ENCODE measurements at regions of chr2 and their contacts with region 1.

Region 1: DNA sequence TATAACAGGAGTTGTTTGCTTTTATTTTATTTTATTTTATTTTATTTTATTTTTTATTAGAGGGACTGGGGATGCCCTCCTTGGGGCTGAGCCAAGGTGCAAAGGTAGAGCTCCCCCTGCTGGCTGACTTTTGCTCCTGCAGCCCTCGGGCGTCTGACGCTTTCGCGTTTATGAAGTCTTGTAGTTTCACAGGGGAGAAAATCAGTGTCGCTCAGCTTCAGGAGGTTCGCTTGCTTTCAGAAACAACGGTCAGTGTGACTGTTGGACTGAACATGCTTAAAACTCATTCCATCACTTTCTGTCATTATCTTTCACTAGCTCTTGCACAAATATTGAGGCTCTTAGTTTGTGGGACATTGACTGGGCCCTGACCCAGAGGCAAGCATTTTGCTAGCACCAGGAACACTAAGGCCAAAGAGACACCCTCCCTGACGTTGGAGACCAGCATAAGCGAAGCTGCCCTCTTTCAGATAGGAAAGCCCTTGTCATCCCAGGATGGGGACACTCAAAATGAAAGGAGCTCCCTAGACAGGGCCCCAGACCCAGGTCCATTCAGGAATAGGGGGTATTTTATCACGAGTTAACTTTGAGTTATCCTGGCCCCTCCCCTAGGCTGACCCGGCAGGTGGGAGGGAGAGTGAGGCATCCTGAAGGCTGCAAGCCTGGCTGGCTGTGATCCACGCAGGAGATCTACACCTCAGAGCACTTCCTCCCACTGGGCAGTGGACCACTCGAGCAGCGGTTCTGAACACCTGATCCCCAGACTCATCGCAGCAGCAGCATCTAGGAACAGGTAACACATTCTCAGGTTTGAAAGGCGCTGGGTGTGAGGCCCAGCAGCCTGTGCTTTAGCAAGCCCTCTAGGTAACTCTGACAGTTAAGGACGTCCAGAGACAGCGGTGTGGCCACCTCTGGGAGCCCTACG is 34.4 kb downstream of the LGALSL start:
- DNase-seq: peak; percentile 24
- H3K4me3 ChIP-seq: no peak overlapping the region
- H3K27ac ChIP-seq: no peak overlapping the region
- H3K27me3 ChIP-seq: peaks cover 39% of the 10 kb centered on the region
- CTCF ChIP-seq: peak; percentile 95

Region 2: GRCh38 chr2:64052468-64053241 is 435.7 kb before region 1 on chr2:
- CTCF ChIA-PET with region 1: interaction called, 29 read pairs
- POLR2A ChIA-PET with region 1: no interaction called
- DNase-seq: no peak
- H3K4me3 ChIP-seq: no peak overlapping the region
- H3K27ac ChIP-seq: no peak overlapping the region
- H3K27me3 ChIP-seq: peaks cover 2% of the 10 kb centered on the region
- CTCF ChIP-seq: no peak

Region 3: GRCh38 chr2:64311948-64312621 is 176.2 kb before region 1 on chr2:
- CTCF ChIA-PET with region 1: interaction called, 13 read pairs
- POLR2A ChIA-PET with region 1: no interaction called
- DNase-seq: peak; percentile 24
- H3K4me3 ChIP-seq: no peak overlapping the region
- H3K27ac ChIP-seq: peak overlapping the region; percentile 39
- H3K27me3 ChIP-seq: peaks cover 35% of the 10 kb centered on the region
- CTCF ChIP-seq: peak; percentile 41

Region 4: GRCh38 chr2:64423303-64423702 is 65.0 kb before region 1 on chr2:
- CTCF ChIA-PET with region 1: no interaction called
- POLR2A ChIA-PET with region 1: no interaction called
- DNase-seq: no peak
- H3K4me3 ChIP-seq: no peak overlapping the region
- H3K27ac ChIP-seq: no peak overlapping the region
- H3K27me3 ChIP-seq: peaks cover 5% of the 10 kb centered on the region
- CTCF ChIP-seq: no peak

Region 5: GRCh38 chr2:64454386-64455332 is 33.7 kb before region 1 on chr2:
- CTCF ChIA-PET with region 1: interaction called, 16 read pairs
- POLR2A ChIA-PET with region 1: no interaction called
- DNase-seq: no peak
- H3K4me3 ChIP-seq: peak overlapping the region; percentile 57
- H3K27ac ChIP-seq: no peak overlapping the region
- H3K27me3 ChIP-seq: peaks cover 45% of the 10 kb centered on the region
- CTCF ChIP-seq: no peak

Region 6: GRCh38 chr2:64474121-64474571 is 14.2 kb before region 1 on chr2:
- CTCF ChIA-PET with region 1: interaction called, 20 read pairs
- POLR2A ChIA-PET with region 1: no interaction called
- DNase-seq: no peak
- H3K4me3 ChIP-seq: no peak overlapping the region
- H3K27ac ChIP-seq: no peak overlapping the region
- H3K27me3 ChIP-seq: peaks cover 34% of the 10 kb centered on the region
- CTCF ChIP-seq: no peak

Region 7: GRCh38 chr2:64504774-64505720 is 16.7 kb after region 1 on chr2:
- CTCF ChIA-PET with region 1: interaction called, 12 read pairs
- POLR2A ChIA-PET with region 1: no interaction called
- DNase-seq: no peak
- H3K4me3 ChIP-seq: no peak overlapping the region
- H3K27ac ChIP-seq: no peak overlapping the region
- H3K27me3 ChIP-seq: peaks cover 18% of the 10 kb centered on the region
- CTCF ChIP-seq: no peak